Mammary epithelial cell (primary cell): ENCODE measurements at regions of chr6 and their contacts with region 1.

Region 1: DNA sequence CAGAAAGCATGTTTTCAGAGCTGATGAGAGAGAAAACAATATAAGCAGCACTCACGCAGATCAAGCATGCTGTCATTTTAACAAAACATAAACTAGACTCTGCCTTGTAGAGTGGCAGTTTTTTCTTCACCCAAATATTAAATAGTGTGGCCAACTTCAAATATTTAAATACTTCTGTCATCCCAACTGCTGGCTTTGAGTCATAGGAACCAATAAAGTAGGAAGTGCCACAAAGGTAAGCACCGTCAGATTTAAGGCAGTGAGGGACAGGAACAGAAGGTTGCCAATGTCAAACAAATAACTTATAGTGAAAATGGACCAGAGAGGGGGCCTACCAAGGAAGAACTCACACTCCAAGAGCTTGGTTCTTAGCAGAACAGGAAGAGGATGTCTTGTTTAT is 222.2 kb downstream of the PKHD1 start:
- DNase-seq: no peak
- H3K4me3 ChIP-seq: no peak overlapping the region
- H3K27ac ChIP-seq: no peak overlapping the region
- H3K4me1 ChIP-seq: peaks cover 8% of the 10 kb centered on the region
- H3K27me3 ChIP-seq: no peaks in the 10 kb centered on the region
- CTCF ChIP-seq: no peak

Region 2: GRCh38 chr6:51494342-51494741 is 370.8 kb before region 1 on chr6:
- CTCF ChIA-PET with region 1: no interaction called
- dilution Hi-C with region 1: no loop called
- in situ Hi-C with region 1: no loop called
- intact Hi-C with region 1: no loop called
- DNase-seq: no peak
- H3K4me3 ChIP-seq: no peak overlapping the region
- H3K27ac ChIP-seq: no peak overlapping the region
- H3K4me1 ChIP-seq: no peaks in the 10 kb centered on the region
- H3K27me3 ChIP-seq: no peaks in the 10 kb centered on the region
- CTCF ChIP-seq: peak in 1 of 2 donors; percentile 33

Region 3: GRCh38 chr6:51885957-51886356 is 20.8 kb after region 1 on chr6:
- CTCF ChIA-PET with region 1: no interaction called
- dilution Hi-C with region 1: no loop called
- in situ Hi-C with region 1: no loop called
- intact Hi-C with region 1: no loop called
- DNase-seq: no peak
- H3K4me3 ChIP-seq: no peak overlapping the region
- H3K27ac ChIP-seq: no peak overlapping the region
- H3K4me1 ChIP-seq: no peaks in the 10 kb centered on the region
- H3K27me3 ChIP-seq: peaks cover 3% of the 10 kb centered on the region
- CTCF ChIP-seq: no peak

Region 4: GRCh38 chr6:52049252-52050050 is 184.3 kb after region 1 on chr6:
- CTCF ChIA-PET with region 1: interaction called, 10 read pairs
- dilution Hi-C with region 1: no loop called
- in situ Hi-C with region 1: no loop called
- intact Hi-C with region 1: no loop called
- DNase-seq: peak; percentile 13
- H3K4me3 ChIP-seq: no peak overlapping the region
- H3K27ac ChIP-seq: no peak overlapping the region
- H3K4me1 ChIP-seq: no peaks in the 10 kb centered on the region
- H3K27me3 ChIP-seq: no peaks in the 10 kb centered on the region
- CTCF ChIP-seq: peak; percentile 73 to 79